Sigmoid colon (tissue), 7 donors: ENCODE measurements at regions of chr10 and their contacts with region 1.

Region 1: DNA sequence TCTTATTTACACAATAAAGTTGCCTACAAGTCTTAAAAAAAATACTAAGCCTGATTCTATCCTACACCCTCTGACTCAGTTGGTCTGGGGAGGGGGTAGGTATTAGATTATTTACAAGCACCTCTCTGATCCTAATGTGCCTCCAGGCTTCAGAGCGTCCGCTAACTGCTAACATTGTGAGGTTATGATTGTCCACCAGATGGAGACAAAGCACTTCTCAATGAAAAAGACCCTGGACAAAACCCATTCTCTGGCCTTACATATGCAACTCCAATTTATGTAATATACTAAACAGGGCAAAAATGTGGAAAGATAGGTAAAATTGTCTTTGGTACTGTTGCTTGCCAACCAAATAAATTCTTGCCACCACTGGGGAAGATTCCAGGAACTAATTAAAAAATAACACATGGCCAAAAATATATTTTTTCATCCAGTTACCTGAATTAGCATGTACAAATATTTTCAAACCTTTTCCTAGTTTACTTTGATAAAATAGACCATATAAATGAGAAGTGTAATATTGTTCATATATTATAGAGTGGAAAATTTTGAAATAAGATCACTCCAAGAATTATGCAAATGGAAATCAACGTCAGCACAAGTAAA is 92.4 kb downstream of the KIF20B start:
- DNase-seq: no peak
- H3K4me3 ChIP-seq: no peak overlapping the region
- H3K27ac ChIP-seq: no peak overlapping the region
- H3K4me1 ChIP-seq: no peaks in the 10 kb centered on the region
- H3K27me3 ChIP-seq: no peaks in the 10 kb centered on the region
- CTCF ChIP-seq: peak; percentile 16 to 70 (median 55)
- EP300 ChIP-seq: no peak
- POLR2A ChIP-seq: no peak

Region 2: DNA sequence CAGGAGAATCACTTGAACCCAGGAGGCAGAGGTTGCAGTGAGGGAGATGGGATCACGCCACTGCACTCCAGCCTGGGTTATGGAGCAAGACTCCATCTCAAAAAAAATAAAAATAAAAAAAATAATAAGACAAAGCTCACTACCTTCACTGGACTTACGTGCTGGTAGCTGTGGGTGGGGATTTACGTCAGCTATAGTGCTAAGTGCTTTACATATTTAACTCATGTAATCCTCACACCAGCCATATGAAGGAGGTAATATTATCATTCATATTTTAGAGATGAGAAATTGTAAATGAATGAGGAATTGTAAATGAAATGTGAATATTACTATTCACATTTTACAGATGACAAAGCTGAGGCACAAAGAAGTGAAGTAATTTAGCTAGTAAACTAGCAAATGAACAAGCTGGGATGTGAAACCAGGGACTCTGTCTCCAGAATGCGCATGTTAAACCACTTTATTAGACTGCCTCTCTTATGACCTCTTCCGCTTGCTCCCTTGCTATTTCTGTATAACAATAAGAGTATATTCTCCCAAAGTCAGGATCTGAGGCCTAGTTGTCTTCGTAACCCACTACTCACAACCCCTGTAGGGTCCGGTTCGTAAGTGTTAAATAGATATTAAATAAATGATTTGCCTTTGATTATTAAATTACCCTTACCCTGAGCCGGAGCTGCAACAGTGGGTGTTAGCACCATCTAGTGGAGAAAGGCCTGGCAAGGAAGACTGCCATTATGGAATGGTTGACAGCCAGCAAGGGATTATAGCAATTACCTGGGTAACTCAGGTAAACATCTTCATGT is 993.8 kb after region 1 on chr10:
- intact Hi-C with region 1: loop called (anchors 5 kb)
- DNase-seq: no peak
- H3K4me3 ChIP-seq: no peak overlapping the region
- H3K27ac ChIP-seq: no peak overlapping the region
- H3K4me1 ChIP-seq: no peaks in the 10 kb centered on the region
- H3K27me3 ChIP-seq: no peaks in the 10 kb centered on the region
- CTCF ChIP-seq: peak in 3 of 4 experiments; percentile 17 to 64 (median 28)
- EP300 ChIP-seq: no peak
- POLR2A ChIP-seq: no peak

Region 3: DNA sequence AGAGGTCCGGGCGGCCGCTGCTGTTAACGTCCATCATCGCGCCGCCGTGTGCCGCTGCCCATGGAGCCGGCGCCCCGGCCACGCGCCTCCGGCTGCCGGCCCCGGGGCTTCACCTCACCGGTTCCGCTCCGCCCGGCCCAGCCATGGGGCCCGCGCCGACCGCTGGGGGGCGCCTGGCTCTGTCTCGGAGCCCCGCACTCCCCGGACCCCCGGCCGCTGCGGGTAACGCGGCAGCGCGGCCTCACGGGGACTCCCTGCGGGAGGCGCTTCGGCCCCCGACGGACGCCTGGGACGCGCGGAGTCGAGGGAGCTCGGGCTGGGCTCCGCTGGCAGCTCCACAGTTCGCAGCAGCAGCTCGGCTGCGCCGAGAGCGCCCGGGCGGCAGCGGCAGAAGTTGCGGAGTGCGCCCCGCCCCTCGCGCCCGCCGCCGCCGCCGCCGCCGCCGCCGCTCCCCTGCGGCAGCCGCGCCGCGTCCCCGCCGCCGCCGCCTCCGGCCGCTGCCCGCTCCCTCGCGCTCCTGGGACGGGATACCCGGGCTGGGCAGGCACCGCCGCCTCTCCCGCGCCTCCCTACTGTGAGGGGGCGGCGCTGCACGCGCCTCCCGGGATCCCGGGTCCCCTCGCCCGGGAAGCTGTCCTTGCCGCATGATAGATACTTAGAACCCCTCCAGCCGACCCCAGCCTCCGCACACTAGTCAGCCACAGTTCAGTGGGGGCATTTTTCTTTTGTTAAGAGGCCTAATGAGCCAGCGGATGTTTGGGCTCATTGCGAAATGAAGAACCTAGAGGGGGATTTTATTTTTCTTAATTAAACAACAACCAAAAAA is 1064.1 kb after region 1 on chr10 and contains the start of gene HTR7:
- intact Hi-C with region 1: loop called (anchors 5 kb)
- DNase-seq: peak; percentile 70
- H3K4me3 ChIP-seq: peak within 1 kb of the TSS; percentile 43 to 71 (median 62)
- H3K27ac ChIP-seq: peak within 1 kb of the TSS; percentile 39 to 71 (median 60)
- H3K4me1 ChIP-seq: peaks cover 0 to 15% (median 9%) of the 10 kb centered on the region in 4 donors
- H3K27me3 ChIP-seq: peaks cover 10 to 47% (median 29%) of the 10 kb centered on the region in 3 donors
- CTCF ChIP-seq: peak in 1 of 4 experiments; percentile 44
- EP300 ChIP-seq: no peak
- POLR2A ChIP-seq: no peak
- total RNA-seq, gene HTR7: 0.68 to 1.4 (median 0.99) TPM

Region 4: GRCh38 chr10:90871766-90872647 is 1078.3 kb after region 1 on chr10 and contains the start of gene RPP30:
- intact Hi-C with region 1: loop called (anchors 5 kb)
- DNase-seq: peak; percentile 89
- H3K4me3 ChIP-seq: peak within 1 kb of the TSS; percentile 66 to 74 (median 72)
- H3K27ac ChIP-seq: peak within 1 kb of the TSS; percentile 66 to 78 (median 70)
- H3K4me1 ChIP-seq: peaks cover 0 to 16% (median 14%) of the 10 kb centered on the region in 4 donors
- H3K27me3 ChIP-seq: no peaks in the 10 kb centered on the region
- CTCF ChIP-seq: no peak
- EP300 ChIP-seq: no peak
- POLR2A ChIP-seq: peak in 1 of 2 donors; percentile 25
- total RNA-seq, gene RPP30: 14.7 to 41.3 (median 33.3) TPM